Sigmoid colon (tissue), 7 donors: ENCODE measurements at regions of chr7 and their contacts with region 1.

Region 1: DNA sequence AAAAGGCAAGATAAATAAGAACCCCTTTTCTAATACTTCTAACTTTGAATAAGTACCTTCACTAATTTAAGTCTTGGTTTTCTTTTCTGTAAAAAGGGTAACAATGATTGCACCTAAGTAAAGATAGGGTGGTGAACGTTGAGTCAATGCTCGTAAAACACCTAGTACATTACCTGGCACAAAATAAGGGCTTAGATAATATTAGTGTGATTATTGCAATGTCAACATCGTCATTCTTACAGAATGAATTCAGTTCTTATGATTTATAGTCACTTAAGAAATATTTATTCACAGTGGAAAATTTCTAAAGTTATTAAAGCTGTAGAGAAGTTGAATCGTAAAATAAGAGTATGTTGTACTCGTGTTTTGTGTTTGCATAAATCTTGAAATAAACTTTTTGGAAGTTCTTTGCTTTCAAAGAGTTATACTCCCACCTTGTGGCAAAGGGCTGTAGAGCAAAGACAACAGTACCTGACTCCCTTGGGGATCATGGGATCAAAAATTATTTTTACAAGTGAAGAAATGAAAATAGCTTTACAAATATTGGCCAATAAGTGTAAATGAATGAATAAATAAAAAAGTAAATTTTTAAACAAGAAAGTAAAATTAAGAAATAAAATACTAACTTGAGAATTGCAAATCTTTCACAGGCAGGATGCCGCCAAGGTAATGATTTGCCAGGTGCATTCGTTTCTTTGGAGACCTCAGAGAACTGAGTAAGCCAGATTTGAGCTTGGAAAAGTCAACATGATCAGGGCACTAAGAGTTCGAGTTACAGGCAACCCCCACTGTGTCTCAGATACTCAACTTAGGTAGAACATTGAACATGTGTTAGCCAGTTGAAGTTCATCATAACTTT is 285.8 kb upstream of the CACNA2D1 start:
- DNase-seq: no peak
- H3K4me3 ChIP-seq: no peak overlapping the region
- H3K27ac ChIP-seq: no peak overlapping the region
- H3K4me1 ChIP-seq: peaks cover 0 to 6% (median 2%) of the 10 kb centered on the region in 4 donors
- H3K27me3 ChIP-seq: no peaks in the 10 kb centered on the region
- CTCF ChIP-seq: peak; percentile 27 to 59 (median 35)
- EP300 ChIP-seq: no peak
- POLR2A ChIP-seq: no peak

Region 2: GRCh38 chr7:82605247-82605872 is 124.0 kb before region 1 on chr7:
- intact Hi-C with region 1: loop called (anchors 10 kb)
- DNase-seq: no peak
- H3K4me3 ChIP-seq: no peak overlapping the region
- H3K27ac ChIP-seq: no peak overlapping the region
- H3K4me1 ChIP-seq: peaks cover 0 to 8% (median 3%) of the 10 kb centered on the region in 4 donors
- H3K27me3 ChIP-seq: no peaks in the 10 kb centered on the region
- CTCF ChIP-seq: peak; percentile 19 to 54 (median 45)
- EP300 ChIP-seq: no peak
- POLR2A ChIP-seq: no peak

Region 3: GRCh38 chr7:82699773-82700186 is 29.6 kb before region 1 on chr7:
- intact Hi-C with region 1: no loop called
- DNase-seq: no peak
- H3K4me3 ChIP-seq: no peak overlapping the region
- H3K27ac ChIP-seq: no peak overlapping the region
- H3K4me1 ChIP-seq: peaks cover 0 to 9% (median 0%) of the 10 kb centered on the region in 4 donors
- H3K27me3 ChIP-seq: no peaks in the 10 kb centered on the region
- CTCF ChIP-seq: no peak
- EP300 ChIP-seq: no peak
- POLR2A ChIP-seq: no peak